Heart right ventricle (tissue), 16 donors: ENCODE measurements at regions of chr11 and their contacts with region 1.

Region 1: DNA sequence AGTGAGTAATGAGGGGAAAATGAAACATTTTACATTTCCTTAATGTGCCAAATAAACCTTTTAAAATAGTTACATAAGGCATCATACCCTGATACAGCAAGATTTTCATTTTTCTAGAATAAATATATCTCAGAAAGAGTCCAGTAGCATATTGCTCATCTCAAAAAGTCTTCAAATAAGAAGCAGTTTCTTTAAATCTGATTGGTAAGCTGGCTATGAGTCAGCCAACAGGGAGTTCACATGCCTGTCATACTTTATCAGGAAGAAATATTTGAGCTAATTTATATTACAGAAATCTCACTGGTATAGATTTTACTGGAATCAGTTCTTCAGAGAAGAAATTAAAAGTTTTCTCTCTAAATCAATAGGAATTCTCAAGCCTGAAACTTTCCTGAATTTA is 258.1 kb downstream of the C11orf87 start:
- DNase-seq: no peak
- ATAC-seq: no peak
- H3K4me3 ChIP-seq: no peak overlapping the region
- H3K27ac ChIP-seq: no peak overlapping the region
- H3K4me1 ChIP-seq: no peaks in the 10 kb centered on the region
- H3K27me3 ChIP-seq: no peaks in the 10 kb centered on the region
- CTCF ChIP-seq: no peak

Region 2: GRCh38 chr11:109364851-109365250 is 315.3 kb before region 1 on chr11:
- intact Hi-C with region 1: loop called in 1 of 10 experiments (anchors 5 kb)
- DNase-seq: no peak
- ATAC-seq: no peak
- H3K4me3 ChIP-seq: no peak overlapping the region
- H3K27ac ChIP-seq: no peak overlapping the region
- H3K4me1 ChIP-seq: no peaks in the 10 kb centered on the region
- H3K27me3 ChIP-seq: no peaks in the 10 kb centered on the region
- CTCF ChIP-seq: no peak

Region 3: GRCh38 chr11:109612496-109612895 is 67.6 kb before region 1 on chr11:
- intact Hi-C with region 1: no loop called
- DNase-seq: no peak
- ATAC-seq: peak in 3 of 8 donors; percentile 42 to 60 (median 47)
- H3K4me3 ChIP-seq: no peak overlapping the region
- H3K27ac ChIP-seq: no peak overlapping the region
- H3K4me1 ChIP-seq: no peaks in the 10 kb centered on the region
- H3K27me3 ChIP-seq: no peaks in the 10 kb centered on the region
- CTCF ChIP-seq: no peak

Region 4: DNA sequence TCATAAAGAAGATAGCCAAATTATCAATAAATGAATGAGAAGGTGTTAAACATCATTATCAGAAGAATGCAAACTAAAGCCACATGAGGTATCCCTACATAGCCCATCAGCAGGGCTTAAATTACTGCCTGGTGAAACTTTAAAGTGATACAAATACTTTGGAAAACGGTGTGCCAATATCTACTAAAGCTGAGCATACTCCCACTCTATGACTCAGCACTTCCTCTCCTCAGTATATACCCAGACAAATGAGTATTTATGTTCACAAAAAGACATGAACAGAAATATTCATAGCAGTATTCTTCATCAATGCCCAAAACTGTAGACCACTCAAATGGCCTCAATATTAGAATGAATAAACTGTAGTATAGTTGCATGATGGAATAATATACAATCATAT is 128.4 kb after region 1 on chr11:
- intact Hi-C with region 1: no loop called
- DNase-seq: no peak
- ATAC-seq: no peak
- H3K4me3 ChIP-seq: no peak overlapping the region
- H3K27ac ChIP-seq: no peak overlapping the region
- H3K4me1 ChIP-seq: no peaks in the 10 kb centered on the region
- H3K27me3 ChIP-seq: no peaks in the 10 kb centered on the region
- CTCF ChIP-seq: no peak